ENCODE measurements at regions of chr10 and their contacts with region 1.

Region 1: DNA sequence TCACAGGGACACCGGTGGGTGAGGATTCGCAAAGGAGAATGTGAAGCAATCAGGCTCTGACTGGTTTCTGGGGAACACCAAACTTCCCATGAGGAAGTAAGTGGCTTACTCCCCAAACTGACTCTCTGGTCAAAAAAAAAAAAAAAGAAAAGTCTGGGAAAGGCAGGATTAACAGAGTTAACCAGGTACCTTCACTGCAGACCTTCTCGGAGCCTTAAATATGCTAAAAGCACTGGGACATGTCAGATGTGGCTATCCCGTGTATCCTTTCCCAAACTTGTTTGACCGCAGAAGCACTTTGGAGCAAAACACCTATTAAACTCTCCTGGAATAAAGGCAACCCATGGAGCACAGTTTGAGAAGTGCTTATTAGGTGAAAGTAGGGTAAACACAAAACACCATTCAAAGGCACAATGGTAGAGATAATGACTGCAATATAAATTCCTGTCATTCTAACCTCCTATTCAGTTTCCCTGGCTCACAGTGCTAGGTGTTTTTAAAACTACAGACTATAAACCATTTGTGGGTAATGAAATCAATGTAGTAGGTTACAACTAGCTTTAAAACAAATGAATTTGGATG is 44.1 kb upstream of the MXI1 start:
- DNase-seq: no peak
- CTCF ChIP-seq: no peak

Region 2: DNA sequence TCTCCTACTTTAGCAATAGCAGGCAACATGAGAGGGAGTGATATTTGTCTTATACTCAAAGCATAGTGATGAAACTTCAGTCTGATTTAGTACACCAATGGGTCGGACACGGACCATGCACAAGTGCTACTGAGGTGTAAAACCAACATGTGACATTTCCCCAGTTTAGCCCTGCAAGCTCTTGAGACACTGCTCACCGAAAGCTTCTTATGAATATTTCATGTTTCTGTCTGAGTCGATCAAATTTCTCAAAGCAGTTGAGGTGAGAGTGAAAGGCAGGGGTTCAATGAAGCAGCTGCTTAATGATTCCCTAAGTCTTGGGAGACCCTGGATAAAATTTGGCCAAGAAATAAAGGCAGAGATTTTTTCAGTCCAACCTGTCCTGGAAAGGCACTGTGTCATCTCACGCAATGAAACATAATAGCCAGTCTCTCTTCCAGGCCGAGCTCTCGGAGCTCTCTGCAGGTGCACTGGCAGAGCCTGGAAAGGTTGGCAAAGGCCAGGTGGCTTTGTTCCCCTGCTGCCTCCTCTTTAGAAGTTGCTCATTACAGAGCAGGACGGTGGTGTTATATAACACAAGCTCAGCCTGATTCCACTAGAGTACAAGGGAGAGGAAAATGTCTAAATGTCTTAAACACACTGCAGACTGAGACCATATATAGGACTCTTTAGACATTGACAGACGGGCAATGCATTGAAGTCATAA is 206.0 kb before region 1 on chr10:
- CTCF ChIA-PET with region 1: no interaction called
- POLR2A ChIA-PET with region 1: no interaction called
- DNase-seq: peak; percentile 62
- CTCF ChIP-seq: no peak

Region 3: DNA sequence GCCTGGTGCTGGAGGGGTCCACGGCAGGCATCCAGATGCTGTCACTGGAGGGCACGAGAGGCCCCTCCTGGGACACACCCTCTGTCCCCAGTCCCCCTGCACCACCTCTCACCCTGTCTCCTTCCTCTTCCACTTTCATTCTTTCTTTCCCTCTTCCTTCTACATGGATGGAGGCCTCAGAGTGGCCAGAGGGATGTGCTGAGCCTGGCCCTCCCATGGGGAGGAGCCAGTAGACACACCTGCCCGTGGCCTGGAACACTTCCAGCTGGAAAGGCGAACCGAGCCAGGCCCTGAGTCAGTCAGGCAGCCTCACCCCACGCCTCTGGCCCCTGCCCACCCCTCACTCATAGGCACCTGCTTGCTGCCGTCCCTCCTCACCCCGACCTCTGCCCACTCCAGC is 11.8 kb before region 1 on chr10:
- CTCF ChIA-PET with region 1: interaction called, 12 read pairs
- POLR2A ChIA-PET with region 1: no interaction called
- DNase-seq: no peak
- CTCF ChIP-seq: no peak

Region 4: DNA sequence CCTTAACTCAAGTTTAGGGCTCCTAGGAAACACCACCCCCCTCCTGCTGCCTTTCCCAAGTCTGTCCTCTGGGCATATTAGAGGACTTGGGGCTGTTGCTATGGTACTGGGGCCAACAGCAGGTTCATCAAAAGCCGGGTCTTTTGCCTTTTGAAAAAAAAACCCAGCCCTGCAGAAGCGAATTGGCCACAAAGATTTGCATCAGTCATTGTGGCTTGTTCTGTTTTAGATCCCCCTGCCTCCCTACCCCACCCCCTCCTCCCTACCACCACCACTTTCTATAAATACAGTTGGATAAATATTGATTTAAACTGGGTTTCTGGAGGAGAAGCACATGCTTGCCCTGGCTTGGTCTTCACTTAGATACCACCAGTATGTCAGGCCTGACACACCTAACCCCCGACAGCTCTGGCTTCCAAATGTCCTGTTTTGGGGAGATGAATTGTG is 51.1 kb after region 1 on chr10:
- CTCF ChIA-PET with region 1: no interaction called
- POLR2A ChIA-PET with region 1: no interaction called
- DNase-seq: peak; percentile 35
- CTCF ChIP-seq: no peak

Measured in GM10248 (cell line).